Breast epithelium (tissue), 4 donors: ENCODE measurements at regions of chr10 and their contacts with region 1.

Region 1: DNA sequence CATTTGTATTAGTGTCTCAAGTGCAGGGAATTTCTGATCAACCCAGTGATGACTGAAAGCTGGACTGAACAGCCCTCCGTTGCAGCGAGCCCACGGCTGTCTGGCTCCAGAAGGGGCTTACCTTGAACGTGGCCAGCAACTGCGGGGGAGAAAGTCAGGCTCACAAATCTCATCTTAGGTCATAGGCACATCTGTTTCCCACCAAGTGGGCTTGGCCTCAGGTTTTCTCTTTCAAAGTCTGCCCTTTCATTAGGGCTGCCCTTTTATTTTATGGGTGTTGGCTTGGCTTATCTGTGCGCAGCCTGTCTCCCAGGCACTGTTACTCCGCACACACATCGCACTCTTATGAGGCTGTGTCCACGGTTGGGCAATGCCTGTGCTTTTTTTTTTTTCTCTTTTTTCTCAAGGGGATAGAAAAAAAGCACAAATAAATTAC is 178.0 kb downstream of the JCAD start:
- DNase-seq: peak in 1 of 2 donors; percentile 35
- H3K4me3 ChIP-seq: no peak overlapping the region
- H3K27ac ChIP-seq: peak overlapping the region in 1 of 2 donors; percentile 55
- H3K4me1 ChIP-seq: no peaks in the 10 kb centered on the region
- H3K27me3 ChIP-seq: no peaks in the 10 kb centered on the region
- CTCF ChIP-seq: no peak
- POLR2A ChIP-seq: no peak

Region 2: DNA sequence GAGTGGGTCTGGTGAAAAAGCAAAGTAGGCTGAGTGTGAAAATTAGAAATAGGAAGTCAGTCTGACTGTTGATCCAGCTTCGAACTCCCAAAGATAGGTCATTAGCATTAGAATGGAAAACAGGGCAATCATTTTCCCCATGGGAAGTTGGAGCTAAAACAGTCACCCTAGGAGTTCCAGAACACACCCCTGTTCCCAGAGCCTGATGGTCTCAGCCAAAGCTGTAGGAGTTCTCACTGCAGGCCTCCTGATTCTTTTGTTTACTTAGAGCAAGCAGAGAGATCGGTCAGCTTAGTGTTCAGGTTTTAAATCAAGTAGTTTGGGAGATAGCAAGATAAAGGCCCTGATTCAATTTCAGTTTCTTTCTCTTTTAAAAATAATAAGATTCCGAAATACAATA is 206.8 kb after region 1 on chr10:
- intact Hi-C with region 1: loop called (anchors 5 kb)
- DNase-seq: no peak
- H3K4me3 ChIP-seq: no peak overlapping the region
- H3K27ac ChIP-seq: no peak overlapping the region
- H3K4me1 ChIP-seq: no peaks in the 10 kb centered on the region
- H3K27me3 ChIP-seq: no peaks in the 10 kb centered on the region
- CTCF ChIP-seq: no peak
- POLR2A ChIP-seq: no peak